Psoas muscle (tissue), 8 donors: ENCODE measurements at regions of chrX and their contacts with region 1.

Region 1: DNA sequence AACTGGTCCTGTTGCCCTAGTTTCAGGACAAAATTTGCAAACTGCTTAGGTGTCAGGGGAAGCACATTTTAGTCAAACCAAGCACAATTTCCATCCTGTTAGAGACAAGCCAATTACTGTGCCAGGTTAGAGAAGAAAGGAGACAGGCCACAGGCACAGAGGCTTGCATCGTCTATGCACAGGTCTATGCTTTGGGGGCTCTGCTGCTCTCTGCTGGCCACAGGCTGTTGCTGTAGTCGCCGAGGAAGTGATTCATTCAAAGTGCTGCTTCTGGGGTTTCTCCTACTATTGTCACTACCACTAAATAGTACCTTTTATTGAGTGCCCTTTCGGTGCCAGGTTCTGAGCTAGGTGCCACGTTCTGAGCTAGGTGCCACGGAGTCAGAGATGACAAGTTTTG is 45.5 kb downstream of the VGLL1 start:
- DNase-seq: peak; percentile 42 to 74
- ATAC-seq: peak; percentile 69 to 88 (median 86)
- H3K4me3 ChIP-seq: no peak overlapping the region
- H3K27ac ChIP-seq: no peak overlapping the region
- H3K4me1 ChIP-seq: no peaks in the 10 kb centered on the region
- H3K27me3 ChIP-seq: peaks cover 0 to 9% (median 0%) of the 10 kb centered on the region in 3 donors
- CTCF ChIP-seq: peak; percentile 65

Region 2: DNA sequence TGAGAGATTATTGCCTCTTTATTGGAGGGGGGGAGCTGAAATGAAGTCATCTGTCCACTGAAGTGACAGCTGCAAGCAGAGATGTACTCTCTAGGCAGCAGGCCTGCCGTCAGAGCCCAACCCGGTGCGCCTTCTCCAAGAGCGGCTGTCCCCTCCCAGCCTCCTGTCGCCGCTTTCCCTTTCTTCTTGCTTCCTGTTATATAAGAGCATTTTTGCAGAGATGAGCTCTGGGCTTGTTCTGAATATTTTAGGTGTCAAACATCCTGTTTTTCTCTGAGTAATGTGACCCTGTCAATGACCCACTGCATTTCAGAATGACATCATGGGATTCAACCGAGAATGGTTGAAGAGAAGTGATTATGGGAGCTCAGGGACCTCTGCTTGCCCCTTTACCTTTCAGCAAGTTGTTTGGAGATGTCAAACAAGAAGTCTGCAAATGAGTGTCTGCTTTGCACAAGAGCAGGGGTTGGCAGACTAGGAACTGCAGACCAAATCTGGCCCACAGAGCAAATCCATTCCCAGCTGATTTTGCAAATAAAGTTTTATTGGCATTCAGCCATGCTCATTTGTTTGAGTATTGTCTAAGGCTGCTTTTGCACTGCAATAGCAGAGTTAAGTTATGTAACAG is 512.4 kb before region 1 on chrX:
- intact Hi-C with region 1: no loop called
- DNase-seq: peak; percentile 20 to 65
- ATAC-seq: peak in 3 of 4 donors; percentile 27 to 52 (median 44)
- H3K4me3 ChIP-seq: no peak overlapping the region
- H3K27ac ChIP-seq: peak overlapping the region; percentile 23
- H3K4me1 ChIP-seq: no peaks in the 10 kb centered on the region
- H3K27me3 ChIP-seq: peaks cover 0 to 4% (median 0%) of the 10 kb centered on the region in 3 donors
- CTCF ChIP-seq: no peak

Region 3: DNA sequence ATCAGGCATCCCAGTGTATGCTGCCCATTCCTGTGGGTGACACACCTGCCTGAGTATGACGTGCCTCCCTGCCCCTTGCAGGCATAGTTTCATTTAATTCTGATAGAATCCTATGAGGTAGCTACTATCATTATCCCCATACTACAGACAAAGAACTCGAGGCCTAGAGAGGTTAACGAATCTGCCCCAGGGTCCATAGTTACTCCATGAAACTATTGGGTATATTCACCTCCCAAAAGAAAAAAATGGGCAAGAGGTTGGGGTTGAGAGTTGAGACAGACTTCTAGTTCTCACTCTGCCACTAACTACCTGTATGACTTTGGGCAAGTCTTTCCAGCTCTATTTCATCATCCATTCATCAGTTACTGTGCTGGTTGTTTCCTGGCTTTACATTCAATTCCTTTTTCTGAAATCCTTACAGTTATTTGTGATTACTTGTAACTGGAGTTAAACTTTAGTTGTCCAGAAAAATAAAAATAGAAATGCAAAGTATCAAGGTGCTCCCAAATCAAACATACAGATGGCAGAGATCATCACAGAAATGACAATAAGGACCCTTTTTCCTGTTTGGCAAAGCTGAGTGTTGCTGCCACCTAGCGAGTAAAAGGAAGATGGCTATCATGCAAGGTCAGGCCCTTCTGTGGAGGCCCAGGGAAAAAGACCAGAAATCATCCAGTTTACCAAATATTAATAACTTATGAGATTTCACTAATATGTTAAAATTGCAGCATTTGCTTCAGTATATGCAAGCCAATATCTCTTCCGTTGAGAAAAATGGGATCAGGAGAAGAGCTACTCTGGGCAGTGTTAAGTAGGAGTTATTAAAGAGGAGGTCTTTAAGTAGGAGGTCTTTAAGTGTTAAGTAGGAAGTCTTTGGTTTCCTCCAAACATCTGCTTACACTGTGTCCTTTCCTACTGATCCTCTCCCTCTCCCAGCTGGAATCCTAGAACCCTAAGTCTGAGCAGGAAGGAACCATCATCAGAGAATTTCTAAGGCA is 309.2 kb before region 1 on chrX:
- intact Hi-C with region 1: loop called in 1 of 2 experiments (anchors 10 kb)
- DNase-seq: no peak
- ATAC-seq: peak; percentile 52 to 76 (median 62)
- H3K4me3 ChIP-seq: no peak overlapping the region
- H3K27ac ChIP-seq: no peak overlapping the region
- H3K4me1 ChIP-seq: no peaks in the 10 kb centered on the region
- H3K27me3 ChIP-seq: no peaks in the 10 kb centered on the region
- CTCF ChIP-seq: peak; percentile 82

Region 4: GRCh38 chrX:136525738-136526606 is 51.6 kb before region 1 on chrX:
- intact Hi-C with region 1: loop called in 1 of 2 experiments (anchors 2 kb)
- DNase-seq: peak; percentile 71 to 82
- ATAC-seq: peak; percentile 93 to 99 (median 98)
- H3K4me3 ChIP-seq: no peak overlapping the region
- H3K27ac ChIP-seq: peak overlapping the region; percentile 67
- H3K4me1 ChIP-seq: peaks cover 14% of the 10 kb centered on the region
- H3K27me3 ChIP-seq: peaks cover 0 to 6% (median 0%) of the 10 kb centered on the region in 3 donors
- CTCF ChIP-seq: no peak